Mammary epithelial cell (primary cell): ENCODE measurements at regions of chr16 and their contacts with region 1.

Region 1: DNA sequence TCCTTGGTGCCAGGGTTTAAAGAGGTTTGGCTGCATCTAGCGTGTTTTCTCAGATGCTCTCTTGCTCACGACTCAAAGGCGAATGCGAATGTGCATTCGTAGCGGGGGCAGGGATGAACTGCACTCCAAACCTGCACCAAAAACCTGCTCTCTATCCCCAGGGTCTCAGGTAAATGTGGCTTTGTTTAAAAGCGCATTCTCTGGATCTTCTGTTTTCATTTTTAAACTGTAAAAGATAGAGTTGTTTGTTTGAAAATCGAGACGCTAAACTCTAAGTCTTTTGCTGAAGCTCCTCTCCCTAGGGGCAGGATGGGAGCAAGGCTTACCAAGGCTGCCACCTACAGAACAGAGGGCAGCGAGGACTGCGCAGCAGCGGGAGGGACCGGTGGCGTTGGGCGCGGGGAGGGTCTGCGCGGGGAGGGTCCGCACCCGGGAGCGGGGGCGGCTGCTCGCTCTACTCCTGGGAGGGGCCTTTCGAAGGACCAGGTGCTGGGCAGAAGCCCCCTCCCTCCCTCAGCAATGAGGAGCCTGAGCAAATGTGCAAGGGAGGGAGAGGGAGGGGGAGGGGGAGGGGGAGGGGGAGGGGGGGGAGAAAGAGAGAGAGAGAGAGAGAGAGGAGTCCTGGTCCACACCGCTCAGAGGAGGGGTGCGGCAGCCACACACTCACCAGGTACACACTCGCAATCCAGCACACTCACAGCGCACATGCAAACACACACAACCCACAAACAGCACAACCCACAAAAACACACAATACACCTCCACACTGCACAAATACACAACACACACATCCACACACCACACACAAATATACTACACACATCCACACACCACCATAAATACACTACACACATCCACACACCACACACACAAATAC is 142.8 kb downstream of the GRIN2A start:
- DNase-seq: no peak
- H3K4me3 ChIP-seq: no peak overlapping the region
- H3K27ac ChIP-seq: no peak overlapping the region
- H3K4me1 ChIP-seq: no peaks in the 10 kb centered on the region
- H3K27me3 ChIP-seq: peaks cover 2% of the 10 kb centered on the region
- CTCF ChIP-seq: peak in 1 of 2 donors; percentile 17

Region 2: GRCh38 chr16:9953908-9954570 is 85.4 kb before region 1 on chr16:
- CTCF ChIA-PET with region 1: no interaction called
- dilution Hi-C with region 1: loop called (anchors 10 kb)
- in situ Hi-C with region 1: no loop called
- intact Hi-C with region 1: no loop called
- DNase-seq: no peak
- H3K4me3 ChIP-seq: no peak overlapping the region
- H3K27ac ChIP-seq: no peak overlapping the region
- H3K4me1 ChIP-seq: no peaks in the 10 kb centered on the region
- H3K27me3 ChIP-seq: no peaks in the 10 kb centered on the region
- CTCF ChIP-seq: no peak

Region 3: GRCh38 chr16:10136916-10137315 is 97.5 kb after region 1 on chr16:
- CTCF ChIA-PET with region 1: no interaction called
- dilution Hi-C with region 1: loop called (anchors 5 kb)
- in situ Hi-C with region 1: no loop called
- intact Hi-C with region 1: no loop called
- DNase-seq: no peak
- H3K4me3 ChIP-seq: no peak overlapping the region
- H3K27ac ChIP-seq: no peak overlapping the region
- H3K4me1 ChIP-seq: no peaks in the 10 kb centered on the region
- H3K27me3 ChIP-seq: no peaks in the 10 kb centered on the region
- CTCF ChIP-seq: no peak